Pancreas (tissue), 10 donors: ENCODE measurements at regions of chr9 and their contacts with region 1.

Region 1: DNA sequence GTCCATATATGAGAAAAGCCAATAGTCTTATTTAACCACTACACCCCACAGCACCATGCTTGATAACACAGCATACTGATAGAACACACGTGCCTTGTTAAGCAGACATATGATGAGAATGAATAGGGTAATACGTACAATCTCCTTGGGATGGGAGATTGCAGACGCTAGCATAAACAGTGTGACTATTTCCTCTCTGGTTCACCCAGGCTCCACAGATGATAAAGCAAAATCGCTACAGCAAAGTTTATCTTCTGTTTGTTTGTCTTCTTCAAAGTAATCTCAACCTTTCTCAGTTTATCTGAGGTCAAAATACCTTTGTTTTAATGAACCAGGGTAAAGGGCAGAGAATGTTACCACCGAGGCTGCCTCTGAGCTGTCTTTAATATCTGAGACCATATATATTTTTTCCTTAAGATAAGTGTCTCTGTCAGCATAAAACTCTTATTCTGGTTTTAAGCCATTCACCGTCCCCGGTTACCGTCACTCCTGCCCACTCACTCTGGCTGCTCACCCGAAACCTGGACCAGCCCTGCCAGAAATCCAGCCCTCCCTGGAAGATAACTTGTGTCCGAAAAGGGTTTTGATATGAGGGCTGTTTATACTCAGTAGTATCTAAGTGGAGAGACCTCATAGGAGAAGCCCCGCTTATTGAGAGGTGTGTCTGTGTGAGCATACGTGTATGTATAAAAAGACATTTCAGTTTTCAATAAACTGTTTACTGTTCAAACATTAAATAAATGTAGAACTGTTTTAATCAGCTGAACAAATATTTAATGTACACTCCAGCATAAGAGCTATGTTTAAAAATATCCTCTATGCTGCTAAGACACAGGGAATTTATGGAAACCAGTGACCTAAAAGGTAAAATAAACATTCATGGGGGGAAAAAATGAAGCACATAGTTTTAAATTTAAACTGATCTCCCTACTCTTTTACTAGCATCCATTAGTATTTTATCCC is 465.4 kb downstream of the RASEF start:
- DNase-seq: peak in 2 of 6 donors; percentile 14 to 51
- ATAC-seq: peak; percentile 82 to 86 (median 83)
- H3K4me3 ChIP-seq: peak overlapping the region in 1 of 4 donors; percentile 0
- H3K27ac ChIP-seq: peak overlapping the region in 3 of 4 donors; percentile 60 to 83 (median 78)
- H3K4me1 ChIP-seq: peaks cover 23 to 40% (median 25%) of the 10 kb centered on the region in 3 donors
- H3K27me3 ChIP-seq: no peaks in the 10 kb centered on the region
- CTCF ChIP-seq: no peak

Region 2: DNA sequence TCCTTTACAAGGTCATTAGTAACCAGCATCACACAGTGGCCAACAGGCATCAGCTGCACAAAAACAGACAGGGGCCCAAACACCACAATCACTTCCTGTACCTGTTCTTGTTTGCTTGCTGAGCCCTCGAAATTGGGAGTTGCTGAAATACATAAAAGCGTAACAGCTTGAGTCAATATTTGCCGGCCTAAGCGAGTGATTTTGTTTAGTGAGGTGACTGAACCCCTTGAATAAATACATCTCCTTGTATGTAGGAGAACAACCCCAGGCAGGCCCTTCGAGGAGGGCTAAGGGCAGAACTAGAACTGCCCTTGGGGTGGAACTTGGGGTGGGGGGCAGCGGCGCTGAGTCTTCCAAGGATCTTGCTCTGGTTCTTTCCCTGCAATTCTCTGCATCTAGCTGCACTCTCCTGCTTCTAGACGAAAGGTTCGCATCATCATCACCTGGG is 37.0 kb before region 1 on chr9:
- intact Hi-C with region 1: loop called in 1 of 3 experiments (anchors 5 kb)
- DNase-seq: peak; percentile 29 to 72 (median 50)
- ATAC-seq: peak; percentile 75 to 90 (median 86)
- H3K4me3 ChIP-seq: no peak overlapping the region
- H3K27ac ChIP-seq: peak overlapping the region in 1 of 4 donors; percentile 57
- H3K4me1 ChIP-seq: peaks cover 18 to 46% (median 39%) of the 10 kb centered on the region in 3 donors
- H3K27me3 ChIP-seq: no peaks in the 10 kb centered on the region
- CTCF ChIP-seq: no peak